Activated T-helper 1 cell treated with anti-CD3 and anti-CD28 coated beads, Interleukin-12 subunit alpha, Interleukin-12 subunit beta, Interleukin-2, Interleukin-4 antibody, amounts not matched to agents 30 ng/mL and 10 ng/mL and 1 ng/mL, durations not matched to agents 14 hours and 24 hours and 36 hours (primary cell): ENCODE measurements at regions of chr22 and their contacts with region 1.

Region 1: DNA sequence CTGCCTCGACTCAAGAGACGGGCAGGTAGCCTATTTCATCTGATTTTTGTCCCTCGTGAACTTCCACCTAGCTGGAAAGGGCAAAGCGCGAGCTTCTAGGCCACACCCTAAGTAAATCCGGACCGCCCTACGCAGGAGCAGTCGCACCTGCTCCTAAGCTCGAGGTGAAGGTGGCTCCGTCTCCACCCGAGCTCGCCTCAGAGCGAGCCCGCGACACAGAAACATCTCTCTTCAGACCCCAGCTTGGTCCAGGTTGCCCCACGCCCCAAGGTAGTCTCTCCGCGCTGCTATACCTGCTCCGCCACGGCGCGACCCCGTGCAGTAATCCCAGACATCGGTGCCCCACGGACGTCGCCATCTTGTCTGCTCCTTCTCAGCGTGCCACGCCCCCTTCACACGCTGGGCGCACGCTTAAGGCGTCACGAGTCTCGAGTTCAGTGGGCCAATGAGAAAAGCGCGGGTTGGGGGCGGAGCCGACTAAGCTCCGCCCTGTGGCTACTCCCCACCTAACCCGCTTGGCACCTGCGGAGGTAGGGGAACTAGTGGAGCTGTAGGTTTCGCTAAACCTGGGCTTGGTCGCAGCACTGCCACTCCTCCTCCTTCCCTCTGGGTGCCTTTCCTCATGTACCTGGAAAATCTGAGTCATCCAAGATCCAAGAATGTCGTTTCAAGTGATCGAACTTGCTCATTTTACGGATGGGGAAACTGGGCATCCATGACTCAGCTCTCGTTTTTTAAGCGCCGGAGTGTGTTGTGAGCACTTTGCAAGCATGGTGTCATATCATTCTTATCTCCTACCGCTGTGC is at the start of gene PISD:
- DNase-seq: peak; percentile 96
- H3K4me3 Mint-ChIP-seq: peak within 1 kb of the TSS; percentile 99
- H3K27ac Mint-ChIP-seq: peak within 1 kb of the TSS; percentile 95
- H3K4me1 Mint-ChIP-seq: peaks cover 29% of the 10 kb centered on the region
- H3K27me3 Mint-ChIP-seq: peaks cover 2% of the 10 kb centered on the region
- total RNA-seq, gene PISD: 43.8 and 43.9 TPM in 2 replicates

Region 2: DNA sequence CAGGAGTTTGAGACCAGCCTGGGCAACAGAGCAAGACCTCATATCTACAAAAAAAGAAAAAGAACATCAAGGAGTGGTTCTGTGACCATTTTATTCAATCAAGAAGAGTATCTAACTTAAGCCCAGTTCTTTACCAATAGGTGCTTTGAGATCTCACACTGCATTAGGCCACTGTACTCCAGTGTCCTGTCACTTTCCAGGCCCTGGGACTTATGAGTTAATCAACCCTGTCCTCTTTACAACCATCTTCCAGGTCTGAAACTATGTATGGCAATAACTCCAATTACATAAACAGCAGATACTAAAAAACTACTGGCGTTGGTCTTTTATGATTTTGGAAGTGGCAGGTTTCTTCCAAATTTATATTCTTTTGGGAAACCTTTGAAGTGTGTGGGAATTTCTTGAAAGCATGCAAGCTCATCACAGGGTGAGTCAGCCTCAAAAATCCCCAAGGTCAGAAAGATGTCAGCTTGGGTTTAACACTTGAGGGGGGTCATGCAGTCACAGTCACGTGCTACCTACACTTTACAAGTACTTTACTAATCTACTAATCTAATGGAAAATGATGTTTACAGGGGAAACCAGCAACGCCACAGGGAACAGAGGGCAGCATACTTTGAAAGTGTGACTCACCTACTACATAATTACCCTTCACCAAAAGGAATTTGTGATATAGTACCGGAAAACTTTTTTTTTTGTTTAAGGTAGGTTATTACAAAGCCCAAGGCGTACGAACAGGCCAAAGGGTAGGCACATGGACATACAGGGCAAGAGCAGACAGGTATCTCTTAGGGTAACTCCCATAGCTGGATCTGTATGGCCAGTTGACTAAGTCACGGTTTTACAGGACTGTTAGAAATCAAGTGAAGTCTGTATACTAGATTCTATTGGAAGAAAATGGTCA is 15.6 kb before region 1 on chr22:
- intact Hi-C with region 1: loop called (anchors 1 kb)
- DNase-seq: no peak
- H3K4me3 Mint-ChIP-seq: no peak overlapping the region
- H3K27ac Mint-ChIP-seq: peak overlapping the region; percentile 82
- H3K4me1 Mint-ChIP-seq: peaks cover 21% of the 10 kb centered on the region
- H3K27me3 Mint-ChIP-seq: no peaks in the 10 kb centered on the region

Region 3: DNA sequence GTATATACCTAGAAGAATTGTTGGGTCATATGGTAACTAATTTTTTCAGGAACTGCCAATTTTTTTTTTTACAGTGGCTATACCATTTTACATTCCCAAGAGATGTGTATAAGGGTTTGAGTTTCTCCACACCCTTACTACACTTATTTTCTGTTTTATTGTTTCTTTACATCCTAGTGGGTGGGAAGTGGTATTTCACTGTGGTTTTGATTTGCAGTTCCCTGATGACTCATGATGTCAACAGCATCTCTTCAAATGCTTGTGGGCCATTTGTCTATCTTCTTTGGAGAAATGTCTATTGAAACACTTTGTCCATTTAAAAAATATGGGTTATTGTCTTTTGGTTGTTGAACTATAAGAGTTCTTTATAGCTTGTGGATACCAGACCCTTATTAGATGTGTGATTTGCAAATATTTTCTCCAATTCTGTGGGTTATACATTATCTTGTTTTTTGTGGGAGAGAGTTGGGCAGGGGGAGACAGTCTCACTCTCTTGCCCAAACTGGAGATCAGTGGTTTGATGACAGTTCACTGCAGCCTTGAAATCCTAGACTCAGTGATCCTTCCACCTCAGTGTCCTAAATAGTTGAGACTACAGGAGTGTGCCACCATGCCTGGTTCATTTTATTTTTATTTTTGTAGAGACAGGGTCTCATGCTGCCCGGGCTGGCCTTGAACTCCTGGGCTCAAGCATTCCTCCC is 30.3 kb after region 1 on chr22:
- intact Hi-C with region 1: loop called (anchors 1 kb)
- DNase-seq: peak; percentile 11
- H3K4me3 Mint-ChIP-seq: peak overlapping the region; percentile 53
- H3K27ac Mint-ChIP-seq: peak overlapping the region; percentile 87
- H3K4me1 Mint-ChIP-seq: peaks cover 31% of the 10 kb centered on the region
- H3K27me3 Mint-ChIP-seq: no peaks in the 10 kb centered on the region

Region 4: DNA sequence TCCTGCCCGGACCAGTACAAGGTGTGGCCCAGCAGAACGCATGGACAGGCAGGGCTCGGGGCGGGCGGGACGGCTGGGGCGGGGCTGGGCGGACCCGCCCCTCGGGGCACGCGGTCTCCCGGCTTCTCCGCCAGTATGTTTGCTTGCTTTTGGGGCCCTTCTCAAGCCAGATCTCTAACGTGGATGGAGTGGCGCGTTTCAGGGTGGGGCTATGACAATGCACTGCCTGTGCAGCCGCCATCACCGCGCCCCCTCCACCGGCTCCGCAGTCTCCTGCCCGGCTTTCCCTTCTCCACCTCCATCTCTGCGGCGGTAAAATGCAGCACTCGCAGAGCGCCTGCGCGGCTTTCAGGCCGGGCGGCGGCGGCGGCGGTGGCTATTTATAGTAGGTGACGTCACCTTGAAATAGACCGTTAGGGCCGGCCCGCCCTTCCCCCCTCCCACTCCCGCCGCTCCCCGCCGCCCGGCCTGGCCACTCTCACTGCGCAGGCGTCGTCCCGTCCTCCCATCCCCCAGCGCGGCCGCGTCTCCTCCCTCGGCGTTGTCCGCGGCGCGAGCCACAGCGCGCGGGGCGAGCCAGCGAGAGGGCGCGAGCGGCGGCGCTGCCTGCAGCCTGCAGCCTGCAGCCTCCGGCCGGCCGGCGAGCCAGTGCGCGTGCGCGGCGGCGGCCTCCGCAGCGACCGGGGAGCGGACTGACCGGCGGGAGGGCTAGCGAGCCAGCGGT is 282.1 kb after region 1 on chr22 and contains the start of gene YWHAH:
- intact Hi-C with region 1: loop called (anchors 1 kb)
- DNase-seq: peak; percentile 87
- H3K4me3 Mint-ChIP-seq: peak within 1 kb of the TSS; percentile 90
- H3K27ac Mint-ChIP-seq: peak within 1 kb of the TSS; percentile 96
- H3K4me1 Mint-ChIP-seq: peaks cover 21% of the 10 kb centered on the region
- H3K27me3 Mint-ChIP-seq: no peaks in the 10 kb centered on the region
- total RNA-seq, gene YWHAH: 128 and 139 TPM in 2 replicates

Region 5: GRCh38 chr22:32080904-32081303 is 418.9 kb after region 1 on chr22:
- intact Hi-C with region 1: loop called (anchors 2 kb)
- DNase-seq: no peak
- H3K4me3 Mint-ChIP-seq: no peak overlapping the region
- H3K27ac Mint-ChIP-seq: no peak overlapping the region
- H3K4me1 Mint-ChIP-seq: no peaks in the 10 kb centered on the region
- H3K27me3 Mint-ChIP-seq: peaks cover 28% of the 10 kb centered on the region

Region 6: GRCh38 chr22:32474635-32475467 is 812.8 kb after region 1 on chr22 and contains the start of gene FBXO7:
- intact Hi-C with region 1: loop called (anchors 1 kb)
- DNase-seq: peak; percentile 82
- H3K4me3 Mint-ChIP-seq: peak within 1 kb of the TSS; percentile 93
- H3K27ac Mint-ChIP-seq: peak within 1 kb of the TSS; percentile 93
- H3K4me1 Mint-ChIP-seq: peaks cover 33% of the 10 kb centered on the region
- H3K27me3 Mint-ChIP-seq: peaks cover 7% of the 10 kb centered on the region
- total RNA-seq, gene FBXO7: 92.3 and 97.8 TPM in 2 replicates